T-cell (primary cell): ENCODE measurements at regions of chr18 and their contacts with region 1.

Region 1: GRCh38 chr18:62982600-62983251 is 267.4 kb downstream of the PHLPP1 start:
- DNase-seq: peak in 33 of 35 experiments; percentile 9 to 77 (median 39)
- ATAC-seq: peak; percentile 58 to 71 (median 68)
- H3K4me3 ChIP-seq: no peak overlapping the region
- H3K4me3 Mint-ChIP-seq: peak overlapping the region in 2 of 3 donors; percentile 0 to 28
- H3K27ac ChIP-seq: no peak overlapping the region
- H3K27ac Mint-ChIP-seq: no peak overlapping the region
- H3K4me1 ChIP-seq: peaks cover 0 to 4% of the 10 kb centered on the region in 2 experiments
- H3K4me1 Mint-ChIP-seq: peaks cover 5 to 8% (median 6%) of the 10 kb centered on the region in 3 donors
- H3K27me3 ChIP-seq: no peaks in the 10 kb centered on the region
- H3K27me3 Mint-ChIP-seq: no peaks in the 10 kb centered on the region

Region 2: GRCh38 chr18:62637807-62638687 is 344.7 kb before region 1 on chr18:
- CTCF ChIA-PET with region 1: interaction called, 7 to 17 read pairs
- POLR2A ChIA-PET with region 1: no interaction called
- DNase-seq: peak in 30 of 35 experiments; percentile 11 to 65 (median 38)
- ATAC-seq: peak in 1 of 4 experiments; percentile 59
- H3K4me3 ChIP-seq: no peak overlapping the region
- H3K4me3 Mint-ChIP-seq: no peak overlapping the region
- H3K27ac ChIP-seq: no peak overlapping the region
- H3K27ac Mint-ChIP-seq: no peak overlapping the region
- H3K4me1 ChIP-seq: no peaks in the 10 kb centered on the region
- H3K4me1 Mint-ChIP-seq: peaks cover 0 to 4% (median 0%) of the 10 kb centered on the region in 3 donors
- H3K27me3 ChIP-seq: peaks cover 0 to 15% of the 10 kb centered on the region in 2 experiments
- H3K27me3 Mint-ChIP-seq: peaks cover 24 to 35% of the 10 kb centered on the region in 2 donors